ENCODE measurements at regions of chr20 and their contacts with region 1.

Region 1: DNA sequence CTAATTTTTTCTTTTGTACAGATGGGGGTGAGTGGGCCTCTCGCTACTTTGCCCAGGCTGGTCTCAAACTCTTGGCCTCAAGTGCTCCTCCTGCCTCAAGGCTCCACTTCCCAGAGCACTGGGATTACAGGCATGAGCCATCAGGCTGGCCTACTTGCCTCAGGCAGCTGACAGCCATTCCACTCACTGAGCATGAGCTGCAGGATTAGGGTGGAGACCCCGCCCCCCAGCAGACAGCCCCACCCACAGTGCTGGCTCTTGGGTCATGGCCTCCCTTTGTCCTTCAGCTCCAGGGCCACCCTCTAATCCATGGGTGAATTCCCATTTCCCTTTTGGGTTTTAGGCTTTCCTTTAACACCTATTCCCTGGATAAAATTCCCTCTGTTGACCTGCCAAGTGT is 82.1 kb downstream of the BFSP1 start:
- DNase-seq: peak; percentile 24 to 52
- H3K4me3 ChIP-seq: no peak overlapping the region
- H3K4me3 Mint-ChIP-seq: no peak overlapping the region
- H3K27ac Mint-ChIP-seq: no peak overlapping the region
- H3K4me1 ChIP-seq: peaks cover 16% of the 10 kb centered on the region
- H3K4me1 Mint-ChIP-seq: peaks cover 12% of the 10 kb centered on the region
- H3K27me3 ChIP-seq: no peaks in the 10 kb centered on the region
- H3K27me3 Mint-ChIP-seq: no peaks in the 10 kb centered on the region
- CTCF ChIP-seq: no peak

Region 2: DNA sequence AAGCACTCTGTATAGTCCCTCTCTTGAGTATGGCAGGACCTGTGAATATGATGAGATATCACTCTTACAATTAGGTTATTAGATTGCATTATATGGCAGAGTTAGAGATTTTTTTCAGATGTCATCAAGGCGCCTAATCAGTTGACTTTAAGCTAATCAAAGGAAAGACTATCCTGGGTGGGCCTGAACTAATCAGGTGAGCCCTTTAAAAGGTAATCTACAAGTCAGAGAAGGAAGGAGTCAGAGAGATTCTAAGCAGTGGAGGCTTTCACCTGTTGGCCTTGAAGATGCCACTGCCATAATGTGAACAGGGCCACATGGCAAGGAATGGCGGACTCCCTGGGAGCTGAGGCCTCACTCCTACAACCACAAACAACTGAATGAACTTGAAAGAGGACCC is 69.4 kb before region 1 on chr20:
- CTCF ChIA-PET with region 1: interaction called, 12 read pairs
- POLR2A ChIA-PET with region 1: no interaction called
- intact Hi-C with region 1: no loop called
- DNase-seq: no peak
- H3K4me3 ChIP-seq: no peak overlapping the region
- H3K4me3 Mint-ChIP-seq: no peak overlapping the region
- H3K27ac Mint-ChIP-seq: no peak overlapping the region
- H3K4me1 ChIP-seq: no peaks in the 10 kb centered on the region
- H3K4me1 Mint-ChIP-seq: no peaks in the 10 kb centered on the region
- H3K27me3 ChIP-seq: no peaks in the 10 kb centered on the region; the same call in 1 of the 2 replicates
- H3K27me3 Mint-ChIP-seq: peaks cover 19% of the 10 kb centered on the region
- CTCF ChIP-seq: no peak

Measured in Caco-2 (cell line).